Activated CD4-positive, alpha-beta memory T cell treated with anti-CD3 and anti-CD28 coated beads, Interleukin-2, amount 10 ng/mL, durations not matched to agents 7 days and 5 days (primary cell): ENCODE measurements at regions of chr2 and their contacts with region 1.

Region 1: GRCh38 chr2:176653479-176654443 is 384.5 kb downstream of the MTX2 start:
- DNase-seq: peak; percentile 38
- H3K4me3 Mint-ChIP-seq: no peak overlapping the region
- H3K27ac Mint-ChIP-seq: no peak overlapping the region
- H3K4me1 Mint-ChIP-seq: peaks cover 21% of the 10 kb centered on the region
- H3K27me3 Mint-ChIP-seq: peaks cover 51% of the 10 kb centered on the region

Region 2: DNA sequence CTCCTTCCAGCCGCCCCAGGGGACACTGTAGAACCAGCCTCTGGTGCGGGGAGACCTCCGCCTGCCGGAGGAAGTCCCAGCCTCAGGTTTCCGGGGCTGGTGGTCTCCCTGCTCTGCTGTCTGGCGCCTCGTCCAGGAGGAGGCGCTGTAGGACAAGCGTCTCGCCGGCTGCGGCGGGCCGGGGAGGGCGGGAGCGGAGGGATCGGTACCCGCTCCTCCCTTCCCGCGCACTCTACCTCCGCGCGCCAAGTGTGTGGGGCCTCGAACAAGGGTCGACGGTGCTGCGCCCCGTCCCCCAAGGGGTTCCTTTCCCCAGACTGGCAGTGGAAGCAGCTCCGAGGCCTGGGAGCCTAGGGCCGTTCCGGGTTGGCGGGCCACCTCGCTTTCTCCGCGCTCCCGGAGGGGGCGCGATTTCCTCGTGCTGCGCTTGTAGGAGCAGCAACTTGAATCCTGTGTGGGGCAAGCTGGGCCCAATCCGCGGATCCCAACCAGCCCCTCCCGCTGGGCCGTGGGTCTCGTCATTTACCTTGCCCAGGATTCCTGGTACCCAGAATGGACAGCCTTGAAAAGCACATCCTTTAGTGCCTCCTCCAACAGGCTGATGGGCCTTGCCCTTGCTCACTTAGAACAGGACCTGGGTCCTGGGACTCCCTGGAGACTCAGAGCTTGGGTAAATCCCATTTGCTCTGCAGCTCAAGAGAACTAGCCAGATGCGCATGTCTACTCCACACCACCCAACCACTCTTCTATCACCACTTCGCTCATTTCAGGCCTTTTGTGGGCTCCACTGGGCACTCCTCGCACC is 513.0 kb before region 1 on chr2:
- CTCF ChIA-PET with region 1: interaction called, 17 read pairs
- POLR2A ChIA-PET with region 1: no interaction called
- DNase-seq: peak; percentile 70
- H3K4me3 Mint-ChIP-seq: peak overlapping the region; percentile 9
- H3K27ac Mint-ChIP-seq: no peak overlapping the region
- H3K4me1 Mint-ChIP-seq: peaks cover 22% of the 10 kb centered on the region
- H3K27me3 Mint-ChIP-seq: peaks cover 74% of the 10 kb centered on the region

Region 3: GRCh38 chr2:176638167-176639015 is 15.4 kb before region 1 on chr2:
- CTCF ChIA-PET with region 1: interaction called, 21 read pairs
- POLR2A ChIA-PET with region 1: interaction called, 3 read pairs
- DNase-seq: peak; percentile 61
- H3K4me3 Mint-ChIP-seq: peak overlapping the region; percentile 51
- H3K27ac Mint-ChIP-seq: no peak overlapping the region
- H3K4me1 Mint-ChIP-seq: peaks cover 1% of the 10 kb centered on the region
- H3K27me3 Mint-ChIP-seq: peaks cover 63% of the 10 kb centered on the region

Region 4: GRCh38 chr2:176664478-176664877 is 10.7 kb after region 1 on chr2:
- CTCF ChIA-PET with region 1: interaction called, 11 read pairs
- POLR2A ChIA-PET with region 1: no interaction called
- DNase-seq: no peak
- H3K4me3 Mint-ChIP-seq: no peak overlapping the region
- H3K27ac Mint-ChIP-seq: no peak overlapping the region
- H3K4me1 Mint-ChIP-seq: no peaks in the 10 kb centered on the region
- H3K27me3 Mint-ChIP-seq: peaks cover 28% of the 10 kb centered on the region

Region 5: GRCh38 chr2:176692533-176692932 is 38.8 kb after region 1 on chr2:
- CTCF ChIA-PET with region 1: no interaction called
- POLR2A ChIA-PET with region 1: no interaction called
- DNase-seq: no peak
- H3K4me3 Mint-ChIP-seq: no peak overlapping the region
- H3K27ac Mint-ChIP-seq: no peak overlapping the region
- H3K4me1 Mint-ChIP-seq: no peaks in the 10 kb centered on the region
- H3K27me3 Mint-ChIP-seq: peaks cover 27% of the 10 kb centered on the region

Region 6: GRCh38 chr2:176978921-176979320 is 325.2 kb after region 1 on chr2:
- CTCF ChIA-PET with region 1: no interaction called
- POLR2A ChIA-PET with region 1: no interaction called
- DNase-seq: no peak
- H3K4me3 Mint-ChIP-seq: no peak overlapping the region
- H3K27ac Mint-ChIP-seq: no peak overlapping the region
- H3K4me1 Mint-ChIP-seq: no peaks in the 10 kb centered on the region
- H3K27me3 Mint-ChIP-seq: peaks cover 27% of the 10 kb centered on the region

Region 7: DNA sequence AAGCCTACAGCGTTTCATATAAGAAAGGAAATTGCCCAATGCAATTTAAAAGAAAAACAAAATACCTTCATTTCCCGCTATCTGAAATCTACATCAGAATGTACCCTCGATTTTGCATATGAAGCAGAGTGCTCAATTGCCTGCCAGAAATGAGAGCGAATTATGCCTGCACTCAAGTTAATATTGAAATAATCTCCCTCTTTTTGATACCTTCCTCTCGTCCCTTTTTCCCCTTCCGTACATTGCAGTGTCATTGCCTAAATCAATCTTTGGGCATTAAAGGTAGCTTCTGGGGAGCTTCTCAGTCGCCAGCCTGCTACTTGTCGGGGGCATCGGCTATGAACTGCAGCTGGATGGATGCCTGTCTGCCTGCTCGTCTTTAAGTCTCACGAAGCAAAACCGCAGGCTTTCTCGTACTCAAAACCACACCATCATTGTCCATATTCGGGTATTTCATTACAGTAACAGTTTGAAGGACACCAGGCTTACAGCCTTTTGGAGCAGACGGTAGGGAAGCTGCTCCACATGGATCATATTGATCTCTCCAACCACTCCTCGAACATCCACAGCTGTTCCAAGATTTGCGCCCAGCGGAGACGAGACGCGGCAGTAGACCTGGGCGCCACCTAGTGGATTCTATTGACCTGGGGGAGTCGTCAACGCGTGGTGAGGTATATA is 494.9 kb after region 1 on chr2:
- CTCF ChIA-PET with region 1: interaction called, 19 read pairs
- POLR2A ChIA-PET with region 1: no interaction called
- DNase-seq: peak; percentile 78
- H3K4me3 Mint-ChIP-seq: peak overlapping the region; percentile 80
- H3K27ac Mint-ChIP-seq: no peak overlapping the region
- H3K4me1 Mint-ChIP-seq: peaks cover 21% of the 10 kb centered on the region
- H3K27me3 Mint-ChIP-seq: peaks cover 58% of the 10 kb centered on the region